ENCODE measurements at regions of chr5 and their contacts with region 1.

Region 1: GRCh38 chr5:2658447-2658846 is 93.0 kb downstream of the IRX2 start:
- DNase-seq: no peak
- ATAC-seq: no peak
- H3K4me3 ChIP-seq: no peak overlapping the region
- H3K4me3 Mint-ChIP-seq: no peak overlapping the region
- H3K27ac ChIP-seq: no peak overlapping the region
- H3K27ac Mint-ChIP-seq: no peak overlapping the region
- H3K4me1 ChIP-seq: no peaks in the 10 kb centered on the region
- H3K4me1 Mint-ChIP-seq: no peaks in the 10 kb centered on the region
- H3K27me3 ChIP-seq: peaks cover 0 to 13% of the 10 kb centered on the region in 2 experiments
- H3K27me3 Mint-ChIP-seq: peaks cover 4 to 5% of the 10 kb centered on the region in 2 donors

Region 2: DNA sequence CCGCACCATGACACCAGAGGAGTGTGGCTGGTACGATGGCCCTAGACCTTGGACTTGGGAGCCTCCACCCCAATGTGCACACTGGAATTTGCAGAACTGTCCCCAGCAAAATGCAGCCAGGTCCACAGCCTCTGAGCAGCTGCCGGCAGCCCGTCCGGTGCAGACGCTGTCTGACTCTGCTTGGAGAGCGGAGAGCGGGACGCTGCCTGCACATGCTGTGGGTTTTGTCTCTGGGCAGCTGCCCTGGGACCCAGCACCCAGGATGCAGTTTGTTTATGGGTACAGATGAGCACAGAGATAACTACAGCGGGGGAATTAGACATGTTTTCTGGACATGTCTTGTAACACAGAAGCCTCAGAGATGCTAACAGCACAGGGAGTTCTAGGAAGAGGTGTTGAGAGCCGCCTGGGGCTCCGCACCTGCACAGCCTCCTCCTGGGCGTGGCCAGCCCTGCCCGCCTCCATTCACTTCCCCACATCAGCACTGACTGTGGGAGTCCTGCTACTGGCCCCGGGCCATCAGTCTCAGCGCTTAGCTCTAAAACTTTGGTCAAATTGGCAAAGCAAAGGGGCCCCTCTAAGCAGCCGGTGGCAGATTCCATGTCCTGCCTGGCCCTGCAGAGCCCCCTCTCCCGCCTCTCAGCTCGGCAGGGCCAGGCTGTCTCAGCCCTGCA is 66.5 kb before region 1 on chr5:
- CTCF ChIA-PET with region 1: no interaction called
- POLR2A ChIA-PET with region 1: no interaction called
- DNase-seq: no peak
- ATAC-seq: no peak
- H3K4me3 ChIP-seq: no peak overlapping the region
- H3K4me3 Mint-ChIP-seq: no peak overlapping the region
- H3K27ac ChIP-seq: no peak overlapping the region
- H3K27ac Mint-ChIP-seq: no peak overlapping the region
- H3K4me1 ChIP-seq: no peaks in the 10 kb centered on the region
- H3K4me1 Mint-ChIP-seq: no peaks in the 10 kb centered on the region
- H3K27me3 ChIP-seq: peaks cover 0 to 3% of the 10 kb centered on the region in 2 experiments
- H3K27me3 Mint-ChIP-seq: no peaks in the 10 kb centered on the region

Region 3: DNA sequence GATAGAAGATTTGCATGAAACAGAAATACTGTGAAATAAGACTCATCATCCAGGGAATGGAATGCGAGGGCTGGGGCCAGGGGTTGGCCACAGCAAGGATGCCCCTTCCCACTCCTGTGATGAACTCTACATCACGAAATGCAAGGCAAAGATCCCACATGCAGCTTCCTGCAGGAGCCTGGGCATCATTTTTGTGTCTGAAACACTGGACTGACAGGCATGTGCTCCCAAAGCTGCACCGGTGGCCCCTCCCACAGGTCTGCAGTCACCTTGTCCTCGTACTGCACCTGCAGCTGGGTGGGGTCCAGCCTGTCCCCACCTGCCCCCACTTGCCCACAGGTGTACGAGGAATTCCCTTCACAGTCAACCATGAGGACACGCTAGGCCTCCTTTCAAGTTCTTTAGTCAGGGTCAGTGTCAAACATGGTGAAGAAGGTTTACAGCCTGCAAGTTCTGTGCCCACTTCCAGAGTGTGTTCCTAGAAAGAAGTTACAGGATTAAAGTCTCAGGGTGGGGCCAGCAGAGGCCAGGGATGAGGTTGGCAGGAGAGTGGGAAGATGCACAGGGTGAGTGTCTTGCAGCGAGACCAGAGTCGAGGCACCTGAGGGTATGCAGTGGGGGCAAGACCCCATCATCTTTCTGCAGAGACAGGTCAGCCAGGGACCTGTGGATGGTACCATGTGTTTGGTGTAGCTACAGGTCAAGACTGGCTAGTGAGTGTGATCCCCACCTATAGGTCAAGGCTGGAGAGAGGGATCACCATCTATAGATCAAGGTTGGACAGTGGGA is 248.0 kb after region 1 on chr5:
- CTCF ChIA-PET with region 1: no interaction called
- POLR2A ChIA-PET with region 1: no interaction called
- DNase-seq: no peak
- ATAC-seq: no peak
- H3K4me3 ChIP-seq: no peak overlapping the region
- H3K4me3 Mint-ChIP-seq: no peak overlapping the region
- H3K27ac ChIP-seq: no peak overlapping the region
- H3K27ac Mint-ChIP-seq: no peak overlapping the region
- H3K4me1 ChIP-seq: no peaks in the 10 kb centered on the region
- H3K4me1 Mint-ChIP-seq: no peaks in the 10 kb centered on the region
- H3K27me3 ChIP-seq: peaks cover 0 to 3% of the 10 kb centered on the region in 2 experiments
- H3K27me3 Mint-ChIP-seq: no peaks in the 10 kb centered on the region

Region 4: DNA sequence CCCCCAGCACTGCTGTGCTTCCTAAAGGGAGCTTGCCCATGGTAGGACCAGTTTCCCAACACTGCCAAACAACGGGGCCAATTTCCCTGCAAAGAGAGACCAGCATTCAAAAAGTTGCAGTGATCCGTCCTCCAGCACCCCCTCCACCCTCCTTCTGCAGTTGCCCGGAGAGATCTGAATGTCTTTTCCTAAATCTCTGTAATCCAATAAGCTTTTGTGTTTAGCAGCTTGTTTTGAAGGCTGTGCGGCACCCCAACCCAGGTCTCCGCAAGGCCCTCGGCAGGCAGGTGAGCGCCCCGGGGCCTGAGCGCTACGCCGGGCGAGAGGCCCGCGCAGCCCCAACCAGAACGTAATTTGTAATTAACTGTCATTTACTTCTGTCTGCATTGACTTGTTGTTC is 459.9 kb after region 1 on chr5:
- CTCF ChIA-PET with region 1: no interaction called
- POLR2A ChIA-PET with region 1: interaction called in 1 of 2 experiments, 13 read pairs
- DNase-seq: no peak
- ATAC-seq: no peak
- H3K4me3 ChIP-seq: no peak overlapping the region
- H3K4me3 Mint-ChIP-seq: no peak overlapping the region
- H3K27ac ChIP-seq: no peak overlapping the region
- H3K27ac Mint-ChIP-seq: no peak overlapping the region
- H3K4me1 ChIP-seq: no peaks in the 10 kb centered on the region
- H3K4me1 Mint-ChIP-seq: no peaks in the 10 kb centered on the region
- H3K27me3 ChIP-seq: peaks cover 12 to 29% of the 10 kb centered on the region in 2 experiments
- H3K27me3 Mint-ChIP-seq: peaks cover 34 to 43% of the 10 kb centered on the region in 2 donors

Region 5: GRCh38 chr5:3251784-3252183 is 593.3 kb after region 1 on chr5:
- CTCF ChIA-PET with region 1: no interaction called
- POLR2A ChIA-PET with region 1: no interaction called
- DNase-seq: no peak
- ATAC-seq: no peak
- H3K4me3 ChIP-seq: no peak overlapping the region
- H3K4me3 Mint-ChIP-seq: no peak overlapping the region
- H3K27ac ChIP-seq: no peak overlapping the region
- H3K27ac Mint-ChIP-seq: no peak overlapping the region
- H3K4me1 ChIP-seq: no peaks in the 10 kb centered on the region
- H3K4me1 Mint-ChIP-seq: no peaks in the 10 kb centered on the region
- H3K27me3 ChIP-seq: peaks cover 0 to 5% of the 10 kb centered on the region in 2 experiments
- H3K27me3 Mint-ChIP-seq: peaks cover 0 to 7% of the 10 kb centered on the region in 2 donors

Measured in T-cell (primary cell).